WTC11 (cell line): ENCODE measurements at regions of chr11 and their contacts with region 1.

Region 1: DNA sequence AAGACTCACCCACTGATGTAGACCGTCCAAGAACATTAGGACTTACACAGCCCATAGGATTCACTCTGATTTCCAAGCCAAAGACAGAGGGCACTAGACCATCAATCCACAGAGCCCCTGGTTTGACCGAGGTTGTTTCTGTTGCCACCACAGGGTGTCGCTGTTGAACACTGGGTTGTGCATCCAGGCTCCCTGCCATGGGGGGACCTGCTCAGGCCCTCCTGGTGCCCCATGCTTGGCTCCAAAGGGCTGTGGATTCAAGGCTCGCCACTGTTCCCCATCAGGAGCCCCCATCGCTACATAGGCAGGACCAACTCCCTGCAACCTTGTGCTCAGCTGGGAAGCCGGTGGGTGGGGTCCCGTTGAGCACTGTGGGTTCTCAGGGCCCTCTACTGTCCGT is 128.0 kb upstream of the ANO1 start:
- DNase-seq: peak; percentile 89
- ATAC-seq: peak; percentile 78
- H3K4me3 Mint-ChIP-seq: no peak overlapping the region
- H3K27ac Mint-ChIP-seq: no peak overlapping the region
- H3K4me1 Mint-ChIP-seq: peaks cover 16% of the 10 kb centered on the region
- H3K27me3 Mint-ChIP-seq: no peaks in the 10 kb centered on the region
- CTCF ChIP-seq: peak; percentile 86

Region 2: DNA sequence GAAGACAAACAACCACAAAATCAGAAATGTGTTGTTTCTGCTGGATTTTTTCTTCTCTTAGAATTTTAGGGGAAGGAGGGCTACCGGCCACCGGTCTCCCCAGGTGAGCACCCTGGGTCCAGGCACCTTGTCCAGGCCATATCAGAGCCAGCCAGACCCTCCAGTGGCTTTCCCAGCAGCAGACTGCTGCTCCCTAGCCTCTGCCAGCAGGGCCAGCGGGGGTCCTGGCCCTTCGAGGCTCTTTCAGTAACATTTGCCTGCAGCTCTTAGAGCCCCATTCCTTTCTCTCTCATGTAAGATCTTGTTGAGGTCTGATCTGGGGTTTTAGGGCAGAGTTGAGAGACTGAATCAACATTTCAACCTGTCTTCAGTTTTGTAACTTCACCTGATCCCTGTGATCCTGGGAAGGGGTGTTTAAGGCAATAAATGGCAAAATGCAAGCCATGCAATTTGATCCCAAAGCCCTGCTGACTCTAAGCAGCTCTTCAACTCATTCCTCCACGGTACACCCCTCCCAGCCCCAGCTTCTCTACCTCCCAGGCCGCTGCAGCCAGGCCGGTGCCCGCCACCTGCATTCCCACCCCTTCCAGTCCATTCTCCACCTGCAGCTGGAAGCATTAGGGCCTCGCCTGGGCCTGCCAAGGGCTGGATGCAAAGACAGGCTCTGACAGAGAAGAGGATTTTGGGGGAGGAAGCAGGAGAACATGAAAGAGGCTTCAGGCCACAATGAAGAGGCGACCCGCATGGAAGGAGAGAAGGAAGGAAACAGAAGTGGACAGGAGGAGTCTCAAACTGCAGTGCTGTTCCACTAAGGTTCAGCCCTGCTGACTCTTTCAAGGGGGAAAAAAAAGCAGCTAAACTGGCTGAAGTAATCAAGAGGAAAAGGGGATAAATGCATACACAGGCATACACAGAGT is 17.9 kb before region 1 on chr11:
- CTCF ChIA-PET with region 1: interaction called, 10 read pairs
- POLR2A ChIA-PET with region 1: no interaction called
- DNase-seq: peak; percentile 39
- ATAC-seq: peak; percentile 46
- H3K4me3 Mint-ChIP-seq: no peak overlapping the region
- H3K27ac Mint-ChIP-seq: no peak overlapping the region; the same call in 1 of the 2 replicates
- H3K4me1 Mint-ChIP-seq: peaks cover 24% of the 10 kb centered on the region
- H3K27me3 Mint-ChIP-seq: peaks cover 26% of the 10 kb centered on the region
- CTCF ChIP-seq: no peak

Region 3: DNA sequence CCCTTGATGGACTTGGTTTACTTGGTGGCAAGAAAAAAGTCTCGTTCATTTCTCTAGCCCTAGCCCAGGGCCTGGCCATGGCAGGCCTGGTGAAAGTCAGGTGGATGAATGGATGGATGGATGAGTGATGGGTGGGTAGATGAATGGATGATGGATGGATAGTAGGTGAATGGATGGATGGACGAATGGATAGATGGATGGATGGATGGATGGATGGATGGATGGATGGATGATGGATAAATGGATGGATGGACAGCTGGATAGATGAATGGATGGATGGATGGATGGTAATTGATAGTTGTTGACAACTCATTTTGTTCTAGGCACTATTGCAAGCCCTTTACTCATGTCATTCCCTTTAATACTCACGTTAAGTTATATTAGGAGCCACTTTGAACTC is 41.9 kb after region 1 on chr11:
- CTCF ChIA-PET with region 1: no interaction called
- POLR2A ChIA-PET with region 1: no interaction called
- DNase-seq: no peak
- ATAC-seq: no peak
- H3K4me3 Mint-ChIP-seq: no peak overlapping the region
- H3K27ac Mint-ChIP-seq: no peak overlapping the region
- H3K4me1 Mint-ChIP-seq: peaks cover 2% of the 10 kb centered on the region
- H3K27me3 Mint-ChIP-seq: peaks cover 60% of the 10 kb centered on the region
- CTCF ChIP-seq: no peak

Region 4: GRCh38 chr11:70059715-70060370 is 109.7 kb after region 1 on chr11:
- CTCF ChIA-PET with region 1: no interaction called
- POLR2A ChIA-PET with region 1: no interaction called
- DNase-seq: no peak
- ATAC-seq: no peak
- H3K4me3 Mint-ChIP-seq: no peak overlapping the region
- H3K27ac Mint-ChIP-seq: no peak overlapping the region
- H3K4me1 Mint-ChIP-seq: peaks cover 8% of the 10 kb centered on the region
- H3K27me3 Mint-ChIP-seq: no peaks in the 10 kb centered on the region; the same call in 1 of the 2 replicates
- CTCF ChIP-seq: no peak

Region 5: DNA sequence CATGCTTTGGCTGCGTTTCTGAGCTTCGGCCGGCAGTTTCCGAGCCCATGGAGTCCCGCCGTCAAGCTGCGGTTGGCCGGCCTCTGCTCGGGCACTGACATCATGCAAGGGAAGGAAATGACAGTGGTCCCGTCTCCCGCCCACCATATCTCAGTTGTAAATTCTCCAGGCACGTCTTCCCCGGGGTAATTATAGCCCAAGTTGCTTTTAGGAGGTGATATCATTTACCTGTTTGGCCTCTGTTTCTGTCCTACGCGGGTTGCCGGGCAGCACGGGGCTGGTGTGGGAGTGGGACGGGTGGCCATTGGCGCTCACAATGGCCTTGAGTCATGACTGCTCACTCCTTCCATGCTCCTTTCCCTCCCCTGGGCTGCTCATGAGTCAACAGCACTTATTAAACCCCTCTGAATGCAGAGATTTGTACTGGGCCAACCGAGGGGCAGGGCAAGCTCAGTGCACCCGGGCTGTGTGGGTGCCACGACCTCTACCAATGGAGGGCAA is 123.8 kb after region 1 on chr11:
- CTCF ChIA-PET with region 1: interaction called, 18 read pairs
- POLR2A ChIA-PET with region 1: no interaction called
- DNase-seq: no peak
- ATAC-seq: peak; percentile 11; the same call in 1 of the 2 replicates
- H3K4me3 Mint-ChIP-seq: no peak overlapping the region
- H3K27ac Mint-ChIP-seq: no peak overlapping the region
- H3K4me1 Mint-ChIP-seq: peaks cover 45% of the 10 kb centered on the region
- H3K27me3 Mint-ChIP-seq: peaks cover 52% of the 10 kb centered on the region
- CTCF ChIP-seq: no peak

Region 6: DNA sequence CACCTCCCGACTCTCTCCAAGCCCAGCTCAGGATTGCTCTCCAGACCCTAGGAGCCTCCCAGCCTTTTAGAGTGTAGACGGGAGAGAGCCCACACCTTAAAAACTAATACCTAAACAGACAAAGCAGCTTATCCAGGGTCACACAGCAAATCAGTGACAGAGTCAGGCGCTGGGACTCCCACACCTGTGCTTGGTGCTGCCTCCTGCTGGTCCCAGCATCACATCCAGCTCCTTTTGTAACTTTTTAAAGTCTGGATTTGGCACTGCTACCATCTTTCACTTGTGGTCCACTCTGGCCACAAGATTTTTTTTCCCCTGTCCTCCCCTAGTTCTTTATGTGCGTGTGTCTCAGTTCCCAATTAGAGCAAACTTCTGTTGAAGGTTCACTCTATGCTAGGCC is 132.7 kb after region 1 on chr11:
- CTCF ChIA-PET with region 1: interaction called, 16 read pairs
- POLR2A ChIA-PET with region 1: interaction called, 5 read pairs
- DNase-seq: no peak
- ATAC-seq: no peak
- H3K4me3 Mint-ChIP-seq: no peak overlapping the region
- H3K27ac Mint-ChIP-seq: no peak overlapping the region
- H3K4me1 Mint-ChIP-seq: peaks cover 3% of the 10 kb centered on the region; the same call in 1 of the 2 replicates
- H3K27me3 Mint-ChIP-seq: peaks cover 29% of the 10 kb centered on the region
- CTCF ChIP-seq: no peak

Region 7: GRCh38 chr11:70158201-70158600 is 208.1 kb after region 1 on chr11:
- CTCF ChIA-PET with region 1: interaction called, 10 read pairs
- POLR2A ChIA-PET with region 1: no interaction called
- DNase-seq: peak; percentile 82
- ATAC-seq: peak; percentile 95
- H3K4me3 Mint-ChIP-seq: no peak overlapping the region
- H3K27ac Mint-ChIP-seq: no peak overlapping the region
- H3K4me1 Mint-ChIP-seq: 0 out of 2 replicates have a peak, but pooled peaks cover 2% of the 10 kb centered on the region
- H3K27me3 Mint-ChIP-seq: no peaks in the 10 kb centered on the region
- CTCF ChIP-seq: 0 out of 2 replicates have a peak, but pooled peaks have one; percentile 15

Region 8: DNA sequence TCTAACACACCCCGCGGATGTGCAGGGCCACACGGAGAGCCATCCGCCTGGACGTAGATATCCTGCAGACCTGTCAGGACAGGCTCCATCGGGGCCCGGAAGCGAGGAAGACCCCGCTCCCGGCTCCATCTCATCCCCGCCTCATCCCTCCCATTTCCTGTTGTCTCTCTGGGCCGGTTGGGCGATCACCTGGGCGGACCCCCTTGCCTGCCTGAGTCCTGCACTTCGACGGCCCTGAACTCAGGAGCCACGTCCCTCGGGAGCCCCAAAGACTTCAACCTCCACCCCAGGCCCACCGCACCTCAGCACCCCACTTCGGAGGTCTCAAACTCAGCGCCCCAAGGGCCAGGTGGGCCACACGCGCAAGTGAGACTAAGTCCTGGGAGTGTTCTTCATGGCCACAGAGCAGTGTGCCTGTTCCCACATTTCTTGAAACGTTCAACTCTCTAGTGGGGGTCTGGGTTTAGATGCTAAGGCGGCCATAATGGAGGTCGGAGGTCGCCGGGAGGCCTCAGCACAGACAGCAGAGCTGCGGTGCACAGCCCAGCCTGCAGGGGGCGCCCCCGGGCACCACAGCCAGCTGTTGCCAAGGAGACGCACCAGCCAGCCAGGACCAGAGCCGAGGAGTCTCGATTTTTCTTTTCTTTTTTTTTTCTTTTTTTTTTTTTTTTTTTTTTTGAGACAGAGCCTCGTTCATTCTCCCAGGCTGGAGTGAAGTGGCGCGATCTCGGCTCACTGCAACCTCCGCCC is 227.0 kb after region 1 on chr11:
- CTCF ChIA-PET with region 1: interaction called, 13 read pairs
- POLR2A ChIA-PET with region 1: no interaction called
- DNase-seq: peak; percentile 90
- ATAC-seq: peak; percentile 75
- H3K4me3 Mint-ChIP-seq: no peak overlapping the region
- H3K27ac Mint-ChIP-seq: no peak overlapping the region
- H3K4me1 Mint-ChIP-seq: peaks cover 24% of the 10 kb centered on the region
- H3K27me3 Mint-ChIP-seq: no peaks in the 10 kb centered on the region
- CTCF ChIP-seq: peak; percentile 90